ENCODE measurements at regions of chr12 and their contacts with region 1.

Region 1: GRCh38 chr12:15522565-15523187 is 200.4 kb downstream of the PTPRO start:
- ATAC-seq: peak in 6 of 8 experiments; percentile 45 to 64 (median 56)
- H3K4me3 ChIP-seq: no peak overlapping the region
- H3K27ac ChIP-seq: no peak overlapping the region
- H3K4me1 ChIP-seq: peaks cover 0 to 7% of the 10 kb centered on the region in 2 donors

Region 2: DNA sequence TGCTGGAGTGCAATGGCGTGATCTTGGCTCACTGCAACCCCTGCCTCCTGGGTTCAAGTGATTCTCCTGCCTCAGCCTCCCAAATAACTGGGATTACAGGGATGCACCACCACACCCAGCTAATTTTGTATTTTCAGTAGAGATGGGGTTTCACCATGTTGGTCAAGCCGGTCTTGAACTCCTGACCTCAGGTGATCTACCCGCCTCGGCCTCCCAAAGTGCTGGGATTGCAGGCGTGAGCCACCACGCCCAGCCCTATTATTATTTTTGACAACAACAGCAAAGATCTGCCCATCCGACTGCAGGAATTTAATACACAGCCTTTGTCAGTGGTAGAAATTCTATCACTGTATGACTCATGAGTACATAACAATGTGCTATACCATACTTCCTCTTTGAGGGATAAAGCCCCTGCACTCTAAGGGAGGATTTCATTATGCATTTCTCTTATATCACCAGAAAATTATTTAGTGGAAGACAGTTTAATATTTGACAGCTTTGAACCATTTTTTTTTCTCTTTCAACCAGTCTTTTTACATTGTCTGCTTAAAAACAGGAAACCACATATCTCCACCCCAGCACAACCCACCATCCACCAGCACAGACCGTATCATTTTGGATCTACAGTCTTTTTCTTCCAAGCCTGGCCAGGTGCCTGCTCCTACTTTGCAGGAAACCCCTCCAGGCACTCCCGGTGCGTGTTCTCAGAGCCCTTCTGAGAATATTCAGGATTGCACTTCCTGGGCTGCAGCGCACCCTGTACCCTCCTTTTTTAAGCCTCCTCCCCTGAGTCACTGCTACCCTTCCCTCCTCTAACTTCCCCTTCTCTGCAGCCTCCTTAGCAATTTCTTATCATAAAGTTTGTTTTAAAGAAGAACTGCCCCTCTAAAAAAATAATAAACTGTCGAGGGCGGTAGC is 561.9 kb before region 1 on chr12:
- in situ Hi-C with region 1: no loop called
- ATAC-seq: peak in 3 of 8 experiments; percentile 72 to 91 (median 79)
- H3K4me3 ChIP-seq: no peak overlapping the region
- H3K27ac ChIP-seq: no peak overlapping the region
- H3K4me1 ChIP-seq: no peaks in the 10 kb centered on the region

Region 3: GRCh38 chr12:15131431-15131830 is 391.2 kb before region 1 on chr12:
- in situ Hi-C with region 1: loop called in 1 of 9 experiments (anchors 25 kb)
- ATAC-seq: peak in 3 of 8 experiments; percentile 27 to 96 (median 91)
- H3K4me3 ChIP-seq: no peak overlapping the region
- H3K27ac ChIP-seq: no peak overlapping the region
- H3K4me1 ChIP-seq: no peaks in the 10 kb centered on the region

Region 4: DNA sequence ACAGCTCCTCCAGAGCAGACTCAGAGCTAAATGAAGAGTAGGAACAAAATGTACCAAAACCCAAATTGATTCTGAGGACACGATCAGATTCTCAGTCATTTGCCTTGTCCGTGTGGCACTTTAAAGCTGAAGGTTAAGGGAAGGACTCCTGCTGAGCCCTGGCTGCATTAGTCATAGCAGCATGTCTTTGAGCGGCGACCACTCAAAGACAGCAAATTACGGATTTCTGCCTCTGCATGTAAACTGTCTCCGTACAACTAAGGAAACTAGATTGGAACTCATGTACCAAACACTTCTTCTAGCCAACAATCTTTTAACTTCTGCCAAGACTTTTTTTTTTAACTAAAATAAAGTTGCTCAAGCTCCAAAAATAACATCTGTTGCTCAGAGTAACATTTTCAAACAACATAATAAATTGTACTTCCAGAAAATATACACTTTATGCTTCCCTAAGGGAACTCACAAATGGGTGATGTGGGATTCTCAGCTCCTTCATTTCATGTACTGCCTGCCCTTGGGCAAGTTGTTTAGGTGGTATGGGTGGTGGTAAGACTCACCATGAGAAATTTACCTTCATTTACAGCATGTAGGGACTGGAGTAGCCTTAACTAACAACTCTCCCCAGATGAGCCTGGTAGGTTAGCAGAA is 357.5 kb before region 1 on chr12:
- in situ Hi-C with region 1: no loop called
- ATAC-seq: peak in 3 of 8 experiments; percentile 9 to 59 (median 34)
- H3K4me3 ChIP-seq: no peak overlapping the region
- H3K27ac ChIP-seq: no peak overlapping the region
- H3K4me1 ChIP-seq: peaks cover 0 to 8% of the 10 kb centered on the region in 2 donors

Region 5: GRCh38 chr12:15276088-15276698 is 246.5 kb before region 1 on chr12:
- in situ Hi-C with region 1: loop called in 7 of 9 experiments (anchors 5 to 25 kb)
- ATAC-seq: peak; percentile 39 to 74 (median 58)
- H3K4me3 ChIP-seq: no peak overlapping the region
- H3K27ac ChIP-seq: no peak overlapping the region
- H3K4me1 ChIP-seq: no peaks in the 10 kb centered on the region

Measured in motor neuron (in vitro differentiated cells).